Activated CD4-positive, alpha-beta memory T cell treated with anti-CD3 and anti-CD28 coated beads, Interleukin-2, amount 10 ng/mL, durations not matched to agents 7 days and 5 days (primary cell): ENCODE measurements at regions of chr11 and their contacts with region 1.

Region 1: GRCh38 chr11:67439321-67439883 is 1.9 kb upstream of the PTPRCAP start:
- DNase-seq: peak; percentile 54
- H3K4me3 Mint-ChIP-seq: peak overlapping the region; percentile 94
- H3K27ac Mint-ChIP-seq: peak overlapping the region; percentile 97
- H3K4me1 Mint-ChIP-seq: peaks cover 62% of the 10 kb centered on the region
- H3K27me3 Mint-ChIP-seq: no peaks in the 10 kb centered on the region

Region 2: GRCh38 chr11:67321313-67321871 is 118.0 kb before region 1 on chr11:
- CTCF ChIA-PET with region 1: no interaction called
- POLR2A ChIA-PET with region 1: no interaction called
- DNase-seq: no peak
- H3K4me3 Mint-ChIP-seq: no peak overlapping the region
- H3K27ac Mint-ChIP-seq: no peak overlapping the region
- H3K4me1 Mint-ChIP-seq: peaks cover 15% of the 10 kb centered on the region
- H3K27me3 Mint-ChIP-seq: no peaks in the 10 kb centered on the region

Region 3: GRCh38 chr11:67391304-67392132 is 47.9 kb before region 1 on chr11 and contains the start of gene RAD9A:
- CTCF ChIA-PET with region 1: interaction called, 3 read pairs
- POLR2A ChIA-PET with region 1: interaction called, 361 read pairs
- DNase-seq: peak; percentile 95
- H3K4me3 Mint-ChIP-seq: peak within 1 kb of the TSS; percentile 94
- H3K27ac Mint-ChIP-seq: peak within 1 kb of the TSS; percentile 81
- H3K4me1 Mint-ChIP-seq: peaks cover 44% of the 10 kb centered on the region
- H3K27me3 Mint-ChIP-seq: no peaks in the 10 kb centered on the region
- total RNA-seq, gene RAD9A: 48.0 to 53.9 TPM

Region 4: DNA sequence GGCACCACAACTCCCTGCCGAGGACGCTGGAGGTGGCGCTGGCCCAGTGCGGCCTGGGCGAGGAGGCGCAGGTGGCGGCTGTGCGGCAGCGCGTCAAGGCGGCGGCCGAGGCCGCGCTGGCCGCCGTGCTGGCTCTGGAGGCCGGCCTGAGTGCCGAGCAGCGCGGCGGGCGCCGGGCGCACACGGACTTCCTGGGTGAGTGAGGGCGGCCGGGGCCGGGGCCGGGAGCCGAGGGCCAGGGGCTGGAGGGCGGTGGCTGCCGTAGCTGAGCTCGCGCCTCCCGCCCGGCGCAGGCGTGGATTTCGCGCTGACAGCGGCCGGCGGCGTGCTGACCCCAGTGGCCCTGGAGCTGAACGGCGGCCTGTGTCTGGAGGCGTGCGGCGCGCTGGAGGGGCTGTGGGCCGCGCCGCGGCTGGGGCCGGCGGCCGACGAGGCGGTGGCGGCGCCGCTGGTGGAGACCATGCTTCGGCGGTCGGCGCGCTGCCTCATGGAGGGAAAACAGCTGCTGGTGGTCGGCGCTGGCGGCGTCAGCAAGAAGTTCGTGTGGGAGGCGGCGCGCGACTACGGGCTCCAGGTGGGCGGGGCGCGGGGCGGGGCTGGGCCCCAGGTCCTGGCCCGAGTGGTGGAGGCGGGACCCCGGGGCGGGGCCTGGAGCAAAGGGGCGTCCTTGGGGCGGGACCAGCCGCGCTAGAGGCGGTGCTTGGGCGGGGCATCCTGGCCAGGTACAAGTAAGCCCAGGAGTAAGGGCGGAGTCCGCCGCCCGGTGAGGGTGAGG is 18.6 kb before region 1 on chr11:
- CTCF ChIA-PET with region 1: interaction called, 3 read pairs
- POLR2A ChIA-PET with region 1: interaction called, 74 read pairs
- DNase-seq: peak; percentile 97
- H3K4me3 Mint-ChIP-seq: peak overlapping the region; percentile 71
- H3K27ac Mint-ChIP-seq: no peak overlapping the region
- H3K4me1 Mint-ChIP-seq: peaks cover 56% of the 10 kb centered on the region
- H3K27me3 Mint-ChIP-seq: peaks cover 12% of the 10 kb centered on the region

Region 5: GRCh38 chr11:67452141-67452952 is 12.9 kb after region 1 on chr11 and contains the start of gene GPR152:
- CTCF ChIA-PET with region 1: interaction called, 3 read pairs
- POLR2A ChIA-PET with region 1: interaction called, 59 read pairs
- DNase-seq: no peak
- H3K4me3 Mint-ChIP-seq: no peak within 1 kb of the TSS
- H3K27ac Mint-ChIP-seq: no peak within 1 kb of the TSS
- H3K4me1 Mint-ChIP-seq: peaks cover 18% of the 10 kb centered on the region
- H3K27me3 Mint-ChIP-seq: peaks cover 5% of the 10 kb centered on the region
- total RNA-seq, gene GPR152: not detected

Region 6: GRCh38 chr11:67482825-67483798 is 43.7 kb after region 1 on chr11 and contains the start of gene AIP:
- CTCF ChIA-PET with region 1: interaction called, 4 read pairs
- POLR2A ChIA-PET with region 1: interaction called, 90 read pairs
- DNase-seq: peak; percentile 98
- H3K4me3 Mint-ChIP-seq: peak within 1 kb of the TSS; percentile 89
- H3K27ac Mint-ChIP-seq: peak within 1 kb of the TSS; percentile 99
- H3K4me1 Mint-ChIP-seq: peaks cover 55% of the 10 kb centered on the region
- H3K27me3 Mint-ChIP-seq: no peaks in the 10 kb centered on the region
- total RNA-seq, gene AIP: 152 to 159 TPM

Region 7: GRCh38 chr11:67507864-67508485 is 68.6 kb after region 1 on chr11 and contains the start of gene CDK2AP2:
- CTCF ChIA-PET with region 1: interaction called, 12 read pairs
- POLR2A ChIA-PET with region 1: interaction called, 21 read pairs
- DNase-seq: peak; percentile 99
- H3K4me3 Mint-ChIP-seq: peak within 1 kb of the TSS; percentile 93
- H3K27ac Mint-ChIP-seq: peak within 1 kb of the TSS; percentile 90
- H3K4me1 Mint-ChIP-seq: peaks cover 41% of the 10 kb centered on the region
- H3K27me3 Mint-ChIP-seq: peaks cover 8% of the 10 kb centered on the region
- total RNA-seq, gene CDK2AP2: 116 to 119 TPM